ENCODE measurements at regions of chrX and their contacts with region 1.

Region 1: DNA sequence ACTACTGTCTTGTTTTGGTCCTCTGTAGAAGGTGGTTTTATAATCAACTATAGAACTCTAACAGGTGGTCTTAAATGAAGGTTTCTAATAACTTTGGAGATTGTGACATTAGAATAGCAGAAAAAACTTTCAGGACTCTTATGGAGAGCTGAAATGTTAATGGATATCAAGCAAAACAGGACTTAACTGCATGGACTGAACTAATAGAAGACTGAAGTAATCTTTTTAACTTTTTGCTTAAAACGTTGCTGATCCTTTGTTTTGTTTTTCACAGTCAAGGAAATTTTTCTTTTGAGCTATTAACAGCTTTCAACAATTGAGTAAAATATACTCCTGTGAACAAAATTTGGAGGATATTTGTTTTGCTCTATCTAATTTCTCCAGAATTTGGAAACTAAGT is 17.2 kb downstream of the NXT2 start:
- DNase-seq: no peak
- H3K4me3 ChIP-seq: no peak overlapping the region
- H3K27ac ChIP-seq: no peak overlapping the region
- H3K4me1 ChIP-seq: no peaks in the 10 kb centered on the region
- H3K27me3 ChIP-seq: peaks cover 0 to 32% of the 10 kb centered on the region in 2 donors
- CTCF ChIP-seq: no peak
- POLR2A ChIP-seq: no peak

Region 2: GRCh38 chrX:108275732-108276131 is 1278.1 kb before region 1 on chrX:
- intact Hi-C with region 1: no loop called
- DNase-seq: no peak
- H3K4me3 ChIP-seq: no peak overlapping the region
- H3K27ac ChIP-seq: no peak overlapping the region
- H3K4me1 ChIP-seq: no peaks in the 10 kb centered on the region
- H3K27me3 ChIP-seq: peaks cover 0 to 35% of the 10 kb centered on the region in 2 donors
- CTCF ChIP-seq: no peak
- POLR2A ChIP-seq: no peak

Region 3: GRCh38 chrX:108945883-108946523 is 607.9 kb before region 1 on chrX:
- intact Hi-C with region 1: loop called (anchors 5 kb)
- DNase-seq: no peak
- H3K4me3 ChIP-seq: no peak overlapping the region
- H3K27ac ChIP-seq: no peak overlapping the region
- H3K4me1 ChIP-seq: no peaks in the 10 kb centered on the region
- H3K27me3 ChIP-seq: peaks cover 0 to 36% of the 10 kb centered on the region in 2 donors
- CTCF ChIP-seq: no peak
- POLR2A ChIP-seq: no peak

Region 4: DNA sequence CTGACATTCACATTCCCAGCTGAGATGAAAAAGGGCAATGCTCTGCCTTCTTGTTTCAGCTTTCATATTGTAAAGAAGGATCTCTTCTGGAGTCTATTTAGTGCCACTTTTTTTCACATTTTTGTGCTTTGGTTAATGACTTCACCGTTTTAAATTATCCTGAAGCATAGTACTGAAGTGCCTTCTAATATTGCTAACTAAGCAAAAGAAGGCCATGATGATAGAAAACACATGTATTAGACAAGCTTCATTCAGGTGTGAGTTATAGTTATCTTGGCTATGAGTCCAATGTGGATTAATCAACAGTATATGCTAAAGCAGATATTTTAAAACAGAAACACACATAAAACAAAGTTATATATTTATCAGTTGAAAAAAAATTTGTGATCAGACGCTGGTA is 23.2 kb after region 1 on chrX:
- intact Hi-C with region 1: no loop called
- DNase-seq: no peak
- H3K4me3 ChIP-seq: no peak overlapping the region
- H3K27ac ChIP-seq: no peak overlapping the region
- H3K4me1 ChIP-seq: no peaks in the 10 kb centered on the region
- H3K27me3 ChIP-seq: peaks cover 0 to 50% of the 10 kb centered on the region in 2 donors
- CTCF ChIP-seq: no peak
- POLR2A ChIP-seq: no peak

Measured in breast epithelium (tissue), 4 donors.